CD4-positive, alpha-beta memory T cell (primary cell): ENCODE measurements at regions of chr4 and their contacts with region 1.

Region 1: DNA sequence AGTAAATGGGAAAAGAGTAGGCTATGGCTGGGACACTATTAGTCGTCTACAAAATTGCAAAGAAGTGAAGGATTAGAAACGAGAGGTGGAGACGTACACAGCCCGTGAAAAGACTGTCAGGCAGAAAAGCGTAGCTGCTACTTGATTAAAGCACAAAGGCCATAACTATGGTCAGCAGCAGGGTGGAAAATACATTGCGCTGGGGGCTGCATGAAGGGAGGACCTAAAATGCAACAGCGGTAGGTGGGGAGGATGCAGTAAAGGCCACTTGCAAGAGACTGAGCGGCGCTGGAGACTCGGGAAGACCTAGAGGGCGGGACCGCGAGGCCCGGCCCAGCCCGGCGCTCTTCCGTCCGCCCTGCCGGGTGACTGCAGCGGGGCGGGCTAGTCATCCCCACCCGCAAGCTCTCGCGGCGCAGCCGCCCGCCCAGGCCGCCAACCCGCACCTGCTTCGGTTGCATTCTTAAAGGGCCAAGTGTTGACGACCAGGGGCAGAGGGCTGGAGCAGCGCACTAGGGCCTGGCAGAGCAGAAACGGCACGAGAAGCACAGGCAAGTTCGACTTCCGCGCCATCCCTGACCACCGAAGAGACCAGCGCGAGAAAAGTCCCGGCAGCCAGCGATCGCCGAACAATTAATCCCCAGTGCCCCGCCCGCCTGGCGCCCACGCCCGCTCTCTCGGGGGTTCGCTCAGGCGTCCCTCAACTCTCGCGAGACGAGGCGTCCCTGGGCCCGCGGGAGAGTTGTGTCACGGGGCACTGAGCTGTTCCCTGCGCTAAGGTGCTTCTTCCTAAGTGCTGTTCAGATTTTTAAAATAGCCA is at the start of gene AGA:
- DNase-seq: peak; percentile 95 to 97 (median 96)
- H3K4me3 ChIP-seq: peak within 1 kb of the TSS; percentile 59 to 81
- H3K4me3 Mint-ChIP-seq: peak within 1 kb of the TSS; percentile 86 to 97 (median 91)
- H3K27ac ChIP-seq: peak within 1 kb of the TSS; percentile 81
- H3K27ac Mint-ChIP-seq: peak within 1 kb of the TSS; percentile 86 to 99 (median 94)
- H3K4me1 ChIP-seq: peaks cover 26% of the 10 kb centered on the region
- H3K4me1 Mint-ChIP-seq: peaks cover 22 to 34% (median 30%) of the 10 kb centered on the region in 4 donors
- H3K27me3 ChIP-seq: no peaks in the 10 kb centered on the region
- H3K27me3 Mint-ChIP-seq: no peaks in the 10 kb centered on the region
- total RNA-seq, gene AGA: 23.2 to 27.3 TPM

Region 2: GRCh38 chr4:176319704-176320339 is 1122.2 kb before region 1 on chr4 and contains the start of gene SPCS3:
- CTCF ChIA-PET with region 1: no interaction called
- POLR2A ChIA-PET with region 1: no interaction called
- intact Hi-C with region 1: loop called (anchors 1 kb)
- DNase-seq: peak; percentile 92 to 95 (median 94)
- H3K4me3 ChIP-seq: peak within 1 kb of the TSS; percentile 40 to 59
- H3K4me3 Mint-ChIP-seq: peak within 1 kb of the TSS; percentile 93 to 98 (median 95)
- H3K27ac ChIP-seq: peak within 1 kb of the TSS; percentile 95
- H3K27ac Mint-ChIP-seq: peak within 1 kb of the TSS; percentile 95 to 98 (median 96)
- H3K4me1 ChIP-seq: peaks cover 49% of the 10 kb centered on the region
- H3K4me1 Mint-ChIP-seq: peaks cover 29 to 60% (median 40%) of the 10 kb centered on the region in 4 donors
- H3K27me3 ChIP-seq: no peaks in the 10 kb centered on the region
- H3K27me3 Mint-ChIP-seq: no peaks in the 10 kb centered on the region
- total RNA-seq, gene SPCS3: 193 to 207 TPM

Region 3: GRCh38 chr4:177309522-177310371 is 132.3 kb before region 1 on chr4 and contains the start of gene NEIL3:
- CTCF ChIA-PET with region 1: interaction called, 4 read pairs
- POLR2A ChIA-PET with region 1: interaction called, 27 read pairs
- intact Hi-C with region 1: loop called (anchors 1 kb)
- DNase-seq: peak; percentile 91 to 94 (median 91)
- H3K4me3 ChIP-seq: peak within 1 kb of the TSS; percentile 64 to 92
- H3K4me3 Mint-ChIP-seq: peak within 1 kb of the TSS; percentile 86 to 96 (median 91)
- H3K27ac ChIP-seq: peak within 1 kb of the TSS; percentile 51
- H3K27ac Mint-ChIP-seq: peak within 1 kb of the TSS; percentile 67 to 93 (median 88)
- H3K4me1 ChIP-seq: peaks cover 35% of the 10 kb centered on the region
- H3K4me1 Mint-ChIP-seq: peaks cover 15 to 41% (median 22%) of the 10 kb centered on the region in 4 donors
- H3K27me3 ChIP-seq: no peaks in the 10 kb centered on the region
- H3K27me3 Mint-ChIP-seq: no peaks in the 10 kb centered on the region
- total RNA-seq, gene NEIL3: 0.15 to 0.17 TPM

Region 4: GRCh38 chr4:177393236-177393635 is 48.8 kb before region 1 on chr4:
- CTCF ChIA-PET with region 1: interaction called, 8 read pairs
- POLR2A ChIA-PET with region 1: interaction called, 22 read pairs
- intact Hi-C with region 1: no loop called
- DNase-seq: peak in 3 of 5 donors; percentile 26 to 35 (median 29)
- H3K4me3 ChIP-seq: no peak overlapping the region
- H3K4me3 Mint-ChIP-seq: peak overlapping the region in 7 of 8 donors; percentile 14 to 65 (median 36)
- H3K27ac ChIP-seq: no peak overlapping the region
- H3K27ac Mint-ChIP-seq: peak overlapping the region in 6 of 7 donors; percentile 30 to 87 (median 80)
- H3K4me1 ChIP-seq: peaks cover 12% of the 10 kb centered on the region
- H3K4me1 Mint-ChIP-seq: peaks cover 13 to 22% (median 18%) of the 10 kb centered on the region in 4 donors
- H3K27me3 ChIP-seq: no peaks in the 10 kb centered on the region
- H3K27me3 Mint-ChIP-seq: peaks cover 0 to 6% of the 10 kb centered on the region in 2 donors